Heart left ventricle (tissue), 16 donors: ENCODE measurements at regions of chr4 and their contacts with region 1.

Region 1: DNA sequence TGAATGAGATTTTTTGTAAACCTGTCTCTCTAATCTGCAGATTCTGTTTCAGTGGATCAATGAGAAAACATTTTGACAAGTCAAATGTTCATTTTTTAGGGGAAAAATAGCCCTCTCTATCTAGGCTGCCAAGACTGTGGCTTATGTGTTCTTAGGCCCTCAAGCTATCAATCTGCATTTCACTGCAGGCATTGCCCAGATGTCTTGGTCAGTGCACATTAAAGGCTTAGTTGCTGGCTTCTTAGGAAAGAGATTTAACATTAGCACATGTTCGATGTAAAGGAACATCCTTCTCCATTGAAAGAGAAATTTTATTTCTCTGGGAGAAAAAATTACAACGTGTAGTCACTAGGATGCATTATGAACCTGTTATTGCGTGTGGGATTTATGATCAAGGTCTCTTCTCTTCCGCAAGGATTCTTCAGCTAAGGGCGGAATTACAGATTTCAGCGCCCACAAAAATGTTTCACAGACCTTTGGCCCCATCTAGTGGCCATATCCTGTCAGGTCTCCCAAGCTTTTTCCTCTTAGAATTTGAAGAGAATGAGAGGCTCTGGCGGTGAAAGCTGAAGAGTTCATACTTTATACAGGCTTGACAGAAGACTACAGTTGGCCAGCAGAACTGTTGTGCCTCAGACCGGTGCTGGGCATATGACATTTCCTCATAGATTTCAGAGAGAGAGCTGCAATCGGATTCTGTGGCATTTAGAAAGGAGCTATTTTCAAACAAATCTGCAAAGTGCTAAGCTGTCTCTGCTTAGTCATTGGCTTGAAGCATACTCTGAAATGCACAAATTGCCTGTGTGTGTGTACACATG is 144.6 kb upstream of the NOCT start:
- DNase-seq: peak in 4 of 5 donors; percentile 31 to 56 (median 41)
- ATAC-seq: peak in 3 of 4 donors; percentile 57 to 68 (median 68)
- H3K4me3 ChIP-seq: no peak overlapping the region
- H3K27ac ChIP-seq: no peak overlapping the region
- H3K4me1 ChIP-seq: peaks cover 0 to 8% (median 0%) of the 10 kb centered on the region in 12 donors
- H3K27me3 ChIP-seq: peaks cover 0 to 14% (median 0%) of the 10 kb centered on the region in 9 donors
- CTCF ChIP-seq: peak; percentile 73 to 91 (median 84)
- POLR2A ChIP-seq: no peak

Region 2: GRCh38 chr4:137819964-137820383 is 1051.0 kb before region 1 on chr4:
- intact Hi-C with region 1: loop called in 1 of 10 experiments (anchors 5 kb)
- DNase-seq: no peak
- ATAC-seq: peak in 3 of 4 donors; percentile 45 to 69 (median 49)
- H3K4me3 ChIP-seq: no peak overlapping the region
- H3K27ac ChIP-seq: no peak overlapping the region
- H3K4me1 ChIP-seq: no peaks in the 10 kb centered on the region
- H3K27me3 ChIP-seq: no peaks in the 10 kb centered on the region
- CTCF ChIP-seq: peak in 9 of 12 donors; percentile 14 to 42 (median 23)
- POLR2A ChIP-seq: no peak

Region 3: GRCh38 chr4:138035781-138036258 is 835.1 kb before region 1 on chr4:
- intact Hi-C with region 1: loop called (anchors 1 to 10 kb)
- DNase-seq: no peak
- ATAC-seq: peak; percentile 64 to 94 (median 83)
- H3K4me3 ChIP-seq: no peak overlapping the region
- H3K27ac ChIP-seq: no peak overlapping the region
- H3K4me1 ChIP-seq: peaks cover 0 to 6% (median 0%) of the 10 kb centered on the region in 12 donors
- H3K27me3 ChIP-seq: no peaks in the 10 kb centered on the region
- CTCF ChIP-seq: peak; percentile 36 to 69 (median 60)
- POLR2A ChIP-seq: no peak

Region 4: GRCh38 chr4:138090150-138090917 is 780.6 kb before region 1 on chr4:
- intact Hi-C with region 1: loop called in 1 of 10 experiments (anchors 10 kb)
- DNase-seq: peak in 2 of 5 donors; percentile 42 to 43
- ATAC-seq: peak in 3 of 4 donors; percentile 74 to 86 (median 74)
- H3K4me3 ChIP-seq: peak overlapping the region in 3 of 12 donors; percentile 18 to 32 (median 28)
- H3K27ac ChIP-seq: no peak overlapping the region
- H3K4me1 ChIP-seq: peaks cover 0 to 14% (median 2%) of the 10 kb centered on the region in 12 donors
- H3K27me3 ChIP-seq: no peaks in the 10 kb centered on the region
- CTCF ChIP-seq: peak; percentile 69 to 89 (median 80)
- POLR2A ChIP-seq: no peak

Region 5: GRCh38 chr4:138182838-138183426 is 688.0 kb before region 1 on chr4:
- intact Hi-C with region 1: loop called in 1 of 10 experiments (anchors 10 kb)
- DNase-seq: peak in 1 of 5 donors; percentile 8
- ATAC-seq: peak; percentile 39 to 80 (median 70)
- H3K4me3 ChIP-seq: no peak overlapping the region
- H3K27ac ChIP-seq: no peak overlapping the region
- H3K4me1 ChIP-seq: peaks cover 0 to 18% (median 1%) of the 10 kb centered on the region in 12 donors
- H3K27me3 ChIP-seq: no peaks in the 10 kb centered on the region
- CTCF ChIP-seq: peak; percentile 48 to 81 (median 69)
- POLR2A ChIP-seq: no peak

Region 6: DNA sequence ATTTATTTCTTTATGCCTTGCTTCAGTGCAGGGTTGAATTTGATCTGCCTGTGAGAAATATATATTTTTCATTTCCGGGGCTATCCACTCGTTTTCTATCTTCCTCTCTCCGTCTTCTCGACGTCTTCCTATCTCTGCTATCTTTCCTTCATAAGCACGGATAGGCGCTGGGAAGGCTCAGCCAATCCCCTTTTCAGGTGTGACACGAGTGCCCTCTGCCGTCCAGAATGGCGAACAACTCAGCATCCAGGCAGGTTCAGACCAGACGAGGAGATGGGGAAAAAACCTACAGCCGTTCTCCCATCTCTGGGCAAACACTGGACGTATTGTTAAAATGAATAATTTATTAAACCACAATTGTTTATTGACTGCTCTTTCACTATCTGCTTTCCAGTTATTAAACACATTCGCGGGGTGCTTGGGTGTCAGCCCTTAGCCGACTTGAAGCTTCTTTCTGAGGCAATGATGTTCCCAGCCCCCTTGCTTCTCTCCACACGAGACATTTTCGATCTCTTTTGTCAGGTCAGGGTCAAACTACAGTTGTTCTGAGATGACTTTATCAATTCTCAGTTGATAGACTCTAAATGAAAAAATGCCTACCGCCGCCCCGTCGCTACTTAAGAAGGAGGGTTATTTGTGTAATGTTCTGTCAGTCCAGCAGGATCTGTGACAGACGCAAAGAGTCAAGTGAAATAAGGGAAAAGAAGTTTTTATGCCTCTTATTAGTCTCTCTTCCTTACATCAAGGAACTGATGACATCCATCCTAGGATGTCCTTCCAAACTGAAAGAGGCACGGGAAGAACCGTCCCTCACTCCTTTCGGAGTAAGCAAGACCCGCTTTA is 48.4 kb after region 1 on chr4:
- intact Hi-C with region 1: loop called in 1 of 10 experiments (anchors 1 kb)
- DNase-seq: peak; percentile 31 to 84 (median 57)
- ATAC-seq: peak; percentile 71 to 96 (median 88)
- H3K4me3 ChIP-seq: peak overlapping the region in 5 of 12 donors; percentile 11 to 24 (median 17)
- H3K27ac ChIP-seq: no peak overlapping the region
- H3K4me1 ChIP-seq: peaks cover 0 to 3% (median 0%) of the 10 kb centered on the region in 12 donors
- H3K27me3 ChIP-seq: no peaks in the 10 kb centered on the region
- CTCF ChIP-seq: peak in 11 of 12 donors; percentile 42 to 90 (median 76)
- POLR2A ChIP-seq: no peak